AG04450 (cell line): ENCODE measurements at regions of chr1 and their contacts with region 1.

Region 1: DNA sequence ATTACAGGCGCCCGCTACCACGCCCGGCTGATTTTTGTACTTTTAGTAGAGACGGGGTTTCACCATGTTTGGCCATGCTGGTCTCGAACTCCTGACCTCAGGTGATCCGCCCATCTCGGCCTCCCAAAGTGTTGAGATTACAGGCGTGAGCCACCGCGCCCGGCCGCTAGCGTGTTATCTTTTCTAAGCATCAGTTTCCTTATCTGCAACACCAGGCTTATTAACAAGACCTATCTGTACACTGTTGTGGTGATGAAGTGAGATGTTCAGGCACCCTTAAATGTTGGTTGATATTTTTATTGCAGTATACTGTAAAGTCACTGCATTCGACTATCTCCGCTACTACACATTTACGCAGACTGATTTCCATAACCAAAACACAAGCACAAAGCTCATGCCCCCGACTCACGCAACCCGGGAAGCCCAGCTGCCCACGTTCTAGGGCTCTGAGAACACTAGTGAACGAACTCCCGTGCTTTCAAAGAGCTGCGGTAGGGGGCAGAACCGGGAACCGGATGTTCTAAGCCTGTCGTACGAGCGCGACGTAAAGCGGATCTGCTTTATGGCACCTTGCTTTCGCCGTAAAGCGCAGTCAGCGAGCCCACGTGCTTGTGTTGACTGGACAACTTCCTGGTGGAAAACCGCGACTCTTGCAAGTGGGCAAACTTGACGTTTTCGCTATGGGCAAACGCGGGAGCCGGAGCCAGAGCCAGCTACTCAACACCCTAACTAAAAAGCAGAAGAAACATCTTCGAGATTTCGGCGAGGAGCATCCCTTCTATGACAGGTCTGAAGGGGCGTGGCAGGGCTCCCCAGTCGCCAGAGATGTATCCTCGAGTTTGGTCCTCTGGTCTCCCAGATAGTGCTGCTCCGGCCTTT is at the start of gene UTP25:
- DNase-seq: peak; percentile 95
- H3K4me3 ChIP-seq: peak within 1 kb of the TSS; percentile 71
- H3K27ac ChIP-seq: peak within 1 kb of the TSS; percentile 75
- H3K27me3 ChIP-seq: no peaks in the 10 kb centered on the region
- CTCF ChIP-seq: peak; percentile 84
- polyA plus RNA-seq, gene UTP25: 7.5 and 8.6 TPM in 2 replicates

Region 2: DNA sequence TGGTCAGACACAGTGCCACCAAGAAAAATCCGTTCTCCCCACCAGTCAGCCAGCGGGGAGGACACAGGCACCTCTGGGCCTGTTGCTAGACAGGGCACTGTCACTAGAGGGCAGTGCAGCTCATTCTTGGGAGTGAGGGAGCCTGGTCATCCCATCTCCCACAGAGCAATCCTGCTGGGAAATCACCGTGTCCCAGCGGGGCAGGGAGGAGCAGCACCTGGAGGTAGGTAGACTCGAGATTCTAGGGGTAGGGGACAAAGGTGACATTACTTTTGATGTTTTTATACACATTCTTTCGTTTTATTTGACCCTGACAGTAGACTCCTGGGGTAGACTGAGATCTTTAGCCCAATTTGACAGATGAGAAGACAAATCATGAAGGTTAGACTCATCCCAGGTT is 250.8 kb before region 1 on chr1:
- CTCF ChIA-PET with region 1: interaction called, 10 read pairs
- POLR2A ChIA-PET with region 1: no interaction called
- DNase-seq: peak; percentile 39
- H3K4me3 ChIP-seq: no peak overlapping the region
- H3K27ac ChIP-seq: no peak overlapping the region
- H3K27me3 ChIP-seq: peaks cover 15% of the 10 kb centered on the region
- CTCF ChIP-seq: peak; percentile 97

Region 3: DNA sequence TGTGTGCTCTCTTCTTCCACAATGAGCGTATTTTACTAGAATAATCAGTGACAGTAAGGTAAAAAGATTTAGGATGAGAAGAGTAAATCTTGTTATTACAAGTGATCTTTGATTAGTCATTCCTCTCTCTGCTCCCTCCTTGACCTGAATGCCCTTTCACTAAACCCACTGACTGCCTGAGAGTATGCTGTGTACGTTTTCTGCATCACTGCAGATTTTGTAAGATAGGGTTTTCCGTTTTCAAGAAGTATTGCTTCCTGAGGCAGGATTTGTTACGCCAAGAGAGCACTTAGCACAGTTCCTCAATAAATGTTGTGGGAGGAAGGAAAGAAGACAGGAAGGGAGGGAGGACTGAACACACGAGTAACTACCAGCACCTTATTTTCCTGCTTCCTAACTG is 167.7 kb before region 1 on chr1:
- CTCF ChIA-PET with region 1: no interaction called
- POLR2A ChIA-PET with region 1: no interaction called
- DNase-seq: no peak
- H3K4me3 ChIP-seq: no peak overlapping the region
- H3K27ac ChIP-seq: no peak overlapping the region
- H3K27me3 ChIP-seq: no peaks in the 10 kb centered on the region
- CTCF ChIP-seq: no peak

Region 4: GRCh38 chr1:209791920-209792319 is 35.7 kb before region 1 on chr1:
- CTCF ChIA-PET with region 1: interaction called, 14 read pairs
- POLR2A ChIA-PET with region 1: no interaction called
- DNase-seq: no peak
- H3K4me3 ChIP-seq: no peak overlapping the region
- H3K27ac ChIP-seq: no peak overlapping the region
- H3K27me3 ChIP-seq: peaks cover 6% of the 10 kb centered on the region
- CTCF ChIP-seq: no peak

Region 5: DNA sequence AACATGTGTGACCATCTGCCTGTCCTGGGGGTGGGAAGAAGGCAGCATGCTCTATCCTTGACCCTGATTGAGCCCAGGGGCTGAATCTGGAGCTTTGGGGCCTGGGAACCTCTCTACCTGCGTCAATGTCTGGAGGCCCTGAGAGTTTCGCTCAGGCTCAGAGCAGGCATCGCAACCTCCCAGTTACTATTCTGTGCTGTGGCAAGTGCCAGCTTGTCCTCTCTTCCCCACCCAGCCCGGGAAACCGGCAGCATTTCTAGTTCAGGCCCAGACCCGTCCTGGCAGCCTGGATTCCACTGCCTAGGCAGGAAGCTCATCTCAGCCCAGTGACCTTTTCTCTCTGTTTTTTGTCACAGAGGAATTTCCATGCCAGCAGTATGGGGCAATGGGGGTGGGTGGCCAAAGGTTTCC is 11.7 kb before region 1 on chr1:
- CTCF ChIA-PET with region 1: interaction called, 158 read pairs
- POLR2A ChIA-PET with region 1: no interaction called
- DNase-seq: no peak
- H3K4me3 ChIP-seq: no peak overlapping the region
- H3K27ac ChIP-seq: no peak overlapping the region
- H3K27me3 ChIP-seq: no peaks in the 10 kb centered on the region
- CTCF ChIP-seq: no peak

Region 6: GRCh38 chr1:209850342-209850979 is 22.8 kb after region 1 on chr1:
- CTCF ChIA-PET with region 1: interaction called, 44 read pairs
- POLR2A ChIA-PET with region 1: no interaction called
- DNase-seq: no peak
- H3K4me3 ChIP-seq: no peak overlapping the region
- H3K27ac ChIP-seq: no peak overlapping the region
- H3K27me3 ChIP-seq: no peaks in the 10 kb centered on the region
- CTCF ChIP-seq: peak; percentile 86

Region 7: DNA sequence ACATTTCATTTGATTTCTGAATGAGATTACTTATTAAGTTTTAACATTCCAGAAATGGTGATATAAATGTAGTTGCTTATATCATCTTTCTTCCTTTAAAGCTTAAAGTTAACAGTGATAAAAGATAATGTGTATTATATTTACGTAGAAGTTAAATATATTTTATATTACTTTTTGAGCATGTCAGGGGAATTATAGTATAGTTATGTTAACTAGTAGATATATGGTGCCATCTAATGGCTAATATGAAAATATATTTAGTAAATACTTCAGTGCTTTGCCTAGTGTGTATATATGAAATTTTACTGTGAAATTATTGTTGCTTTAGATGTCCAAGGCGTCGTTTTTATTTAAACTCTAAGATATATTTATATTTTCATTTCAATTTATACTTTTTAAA is 161.9 kb after region 1 on chr1:
- CTCF ChIA-PET with region 1: interaction called, 134 read pairs
- POLR2A ChIA-PET with region 1: no interaction called
- DNase-seq: no peak
- H3K4me3 ChIP-seq: no peak overlapping the region
- H3K27ac ChIP-seq: no peak overlapping the region
- H3K27me3 ChIP-seq: no peaks in the 10 kb centered on the region
- CTCF ChIP-seq: peak; percentile 27; the same call in 1 of the 2 replicates

Region 8: DNA sequence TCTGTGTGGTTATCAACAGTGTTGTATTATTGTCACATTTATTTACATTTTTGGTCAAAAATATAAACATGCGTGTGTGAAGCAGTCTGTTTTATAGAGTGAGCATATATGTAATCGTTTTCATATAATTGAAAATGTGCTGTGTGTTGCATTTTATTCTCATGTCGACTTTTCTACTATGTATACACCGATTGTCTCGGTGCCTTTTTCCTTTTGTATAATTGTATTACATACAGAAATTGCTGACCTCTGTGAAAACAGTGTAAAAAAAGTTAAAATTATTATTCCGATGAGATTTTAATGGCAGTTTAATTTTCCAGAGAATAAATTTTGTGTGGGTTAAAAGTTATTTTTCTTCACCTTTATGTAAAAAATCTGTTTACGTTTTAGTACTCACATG is 342.6 kb after region 1 on chr1:
- CTCF ChIA-PET with region 1: no interaction called
- POLR2A ChIA-PET with region 1: no interaction called
- DNase-seq: no peak
- H3K4me3 ChIP-seq: no peak overlapping the region
- H3K27ac ChIP-seq: no peak overlapping the region
- H3K27me3 ChIP-seq: no peaks in the 10 kb centered on the region
- CTCF ChIP-seq: no peak

Region 9: DNA sequence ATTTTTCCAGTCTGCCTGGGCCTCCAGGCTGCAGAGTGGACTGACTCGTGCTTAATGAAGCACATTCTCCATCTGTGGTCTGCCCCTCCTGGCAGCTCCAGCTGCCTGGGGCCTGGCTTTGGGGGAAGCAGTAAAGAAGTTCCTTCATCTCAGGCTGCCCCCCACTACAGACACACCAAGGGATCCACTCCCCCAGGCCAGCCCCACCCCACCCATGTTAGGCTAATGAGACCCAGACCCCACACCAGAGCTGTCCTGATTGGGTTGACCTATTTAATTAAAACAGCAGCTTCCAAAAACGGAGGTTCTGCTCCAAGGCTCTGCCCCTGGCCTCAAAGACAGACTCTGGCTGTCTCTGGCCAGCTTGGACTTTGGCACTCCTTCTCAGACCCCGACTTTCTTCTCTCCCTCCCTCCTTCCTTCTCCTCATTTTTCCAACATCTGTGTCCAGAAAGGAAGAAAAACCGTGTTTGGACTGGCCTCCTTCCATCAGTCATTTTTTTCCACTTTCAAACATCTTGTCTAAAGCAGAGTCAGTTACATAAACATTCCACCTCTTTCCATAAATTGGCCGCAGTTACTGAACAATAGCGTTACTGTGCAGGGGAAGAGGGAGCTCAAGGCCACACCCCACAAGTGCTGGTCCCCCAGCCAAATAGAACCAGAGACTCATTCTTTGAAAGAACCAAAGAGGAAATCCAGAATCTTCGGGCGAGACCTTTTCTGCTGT is 434.7 kb after region 1 on chr1:
- CTCF ChIA-PET with region 1: no interaction called
- POLR2A ChIA-PET with region 1: no interaction called
- DNase-seq: peak; percentile 58
- H3K4me3 ChIP-seq: no peak overlapping the region
- H3K27ac ChIP-seq: peak overlapping the region; percentile 47
- H3K27me3 ChIP-seq: peaks cover 3% of the 10 kb centered on the region
- CTCF ChIP-seq: no peak